Head of caudate nucleus (tissue), 42 donors: ENCODE measurements at regions of chr2 and their contacts with region 1.

Region 1: GRCh38 chr2:178136321-178137025 is 24.2 kb downstream of the RBM45 start:
- DNase-seq: no peak

Region 2: DNA sequence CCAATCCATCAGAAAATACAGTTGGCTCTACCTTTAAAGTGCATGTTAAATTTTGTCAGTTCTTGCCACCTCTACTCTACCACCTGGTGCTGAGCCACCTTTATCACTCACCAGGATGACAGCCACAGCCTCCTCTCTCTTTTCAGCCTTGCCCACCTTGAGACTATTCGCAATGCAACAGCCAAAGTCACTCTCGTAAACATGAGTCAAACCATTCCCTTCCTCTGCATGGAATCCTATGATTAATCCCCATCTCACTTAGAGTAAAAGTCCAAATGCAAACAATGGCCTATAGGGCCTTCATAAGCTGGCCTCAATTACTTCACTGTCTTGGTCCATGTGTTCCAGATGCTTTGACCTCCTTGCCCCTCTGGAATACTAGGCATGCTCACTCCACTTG is 52.0 kb after region 1 on chr2:
- intact Hi-C with region 1: loop called (anchors 10 kb)
- DNase-seq: no peak

Region 3: DNA sequence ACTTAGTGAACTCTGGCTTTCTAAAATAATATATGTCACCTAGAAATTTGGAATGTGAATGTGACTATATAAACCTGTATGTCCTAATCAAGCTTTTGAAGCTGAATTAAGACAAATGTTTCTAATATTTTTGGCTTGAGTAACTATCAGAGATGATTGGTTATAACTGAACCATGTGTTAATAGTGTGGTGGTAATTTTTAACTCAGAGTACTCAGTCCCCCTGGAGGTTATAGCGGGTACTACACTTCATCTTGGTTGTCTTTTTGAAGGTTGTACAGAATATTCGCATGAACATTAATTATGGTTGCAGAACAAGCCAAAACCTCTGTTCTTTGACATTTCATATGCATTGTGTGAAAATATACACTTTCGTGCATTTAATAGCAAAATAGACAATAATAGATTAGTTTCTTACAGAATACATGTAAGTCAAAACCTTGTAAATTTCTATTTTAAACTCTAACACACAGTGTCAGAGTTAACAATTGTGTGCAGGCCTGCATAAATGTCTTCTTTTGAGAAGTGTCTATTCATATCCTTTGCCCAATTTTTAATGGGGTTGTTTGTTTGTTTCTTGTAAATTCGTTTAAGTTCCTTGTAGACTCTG is 143.9 kb after region 1 on chr2:
- intact Hi-C with region 1: loop called (anchors 10 kb)
- DNase-seq: peak in 14 of 42 donors; percentile 17 to 84 (median 44)

Region 4: GRCh38 chr2:178350051-178350450 is 213.6 kb after region 1 on chr2:
- intact Hi-C with region 1: no loop called
- DNase-seq: no peak